Common myeloid progenitor, CD34-positive (primary cell): ENCODE measurements at regions of chr7 and their contacts with region 1.

Region 1: GRCh38 chr7:140479062-140479738 is at the start of gene MKRN1:
- DNase-seq: peak; percentile 85 to 92 (median 90)
- H3K4me3 ChIP-seq: peak within 1 kb of the TSS; percentile 69 to 92 (median 87)
- H3K27ac ChIP-seq: peak within 1 kb of the TSS; percentile 71 to 93
- H3K4me1 ChIP-seq: peaks cover 6 to 26% (median 23%) of the 10 kb centered on the region in 4 experiments
- H3K27me3 ChIP-seq: no peaks in the 10 kb centered on the region

Region 2: GRCh38 chr7:140439359-140439758 is 39.8 kb before region 1 on chr7:
- CTCF ChIA-PET with region 1: no interaction called
- POLR2A ChIA-PET with region 1: no interaction called
- DNase-seq: no peak
- H3K4me3 ChIP-seq: no peak overlapping the region
- H3K27ac ChIP-seq: no peak overlapping the region
- H3K4me1 ChIP-seq: peaks cover 0 to 3% (median under 1%) of the 10 kb centered on the region in 4 experiments
- H3K27me3 ChIP-seq: peaks cover 0 to 13% (median 0%) of the 10 kb centered on the region in 5 experiments

Region 3: GRCh38 chr7:140494867-140495266 is 15.7 kb after region 1 on chr7:
- CTCF ChIA-PET with region 1: interaction called, 30 read pairs
- POLR2A ChIA-PET with region 1: interaction called, 3 read pairs
- DNase-seq: no peak
- H3K4me3 ChIP-seq: no peak overlapping the region
- H3K27ac ChIP-seq: no peak overlapping the region
- H3K4me1 ChIP-seq: no peaks in the 10 kb centered on the region
- H3K27me3 ChIP-seq: no peaks in the 10 kb centered on the region

Region 4: GRCh38 chr7:140517546-140518369 is 38.6 kb after region 1 on chr7:
- CTCF ChIA-PET with region 1: interaction called, 13 read pairs
- POLR2A ChIA-PET with region 1: interaction called, 3 read pairs
- DNase-seq: peak; percentile 64 to 70 (median 68)
- H3K4me3 ChIP-seq: no peak overlapping the region
- H3K27ac ChIP-seq: no peak overlapping the region
- H3K4me1 ChIP-seq: peaks cover 0 to 3% (median 2%) of the 10 kb centered on the region in 4 experiments
- H3K27me3 ChIP-seq: peaks cover 0 to 4% (median 0%) of the 10 kb centered on the region in 5 experiments

Region 5: GRCh38 chr7:140562926-140563481 is 83.8 kb after region 1 on chr7:
- CTCF ChIA-PET with region 1: no interaction called
- POLR2A ChIA-PET with region 1: no interaction called
- DNase-seq: no peak
- H3K4me3 ChIP-seq: no peak overlapping the region
- H3K27ac ChIP-seq: no peak overlapping the region
- H3K4me1 ChIP-seq: no peaks in the 10 kb centered on the region
- H3K27me3 ChIP-seq: peaks cover 0 to 6% (median 0%) of the 10 kb centered on the region in 5 experiments

Region 6: DNA sequence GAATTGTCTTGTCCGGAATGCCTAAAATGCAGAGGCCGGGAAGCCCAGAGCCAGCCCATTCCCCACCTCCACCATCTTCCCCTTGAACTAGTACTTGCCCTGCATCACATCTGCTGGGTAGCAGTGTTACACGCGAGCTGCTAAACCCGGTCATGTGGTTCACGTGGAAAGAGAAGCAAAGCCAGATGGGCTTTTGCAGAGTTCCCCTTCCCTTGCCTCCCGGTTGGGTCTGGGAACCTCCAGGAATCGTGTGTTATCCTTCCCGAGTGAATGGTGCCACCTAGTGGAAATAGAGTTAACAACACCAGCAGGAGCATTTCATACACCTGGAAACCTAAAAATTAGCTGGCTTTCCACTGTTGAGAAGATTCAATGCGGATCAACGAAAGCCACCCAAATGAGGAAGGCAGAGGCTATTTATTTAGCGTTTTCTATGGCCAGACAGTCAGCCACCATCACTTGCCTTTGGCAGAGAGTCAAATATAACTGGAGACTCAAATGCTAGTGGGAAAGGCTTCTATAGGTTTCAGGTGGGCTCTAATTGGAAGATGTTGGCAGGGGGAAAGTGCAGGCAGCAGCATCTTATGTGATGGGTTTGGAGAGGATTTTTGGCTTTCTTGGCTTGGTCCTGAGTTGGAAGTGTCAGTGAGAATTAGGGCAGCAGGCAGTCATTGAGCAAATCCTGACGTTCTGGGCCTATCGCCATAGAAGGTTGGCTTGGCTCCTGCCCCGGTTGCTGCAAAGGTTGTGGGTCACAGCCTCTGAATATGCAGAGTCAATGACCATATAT is 174.3 kb after region 1 on chr7:
- CTCF ChIA-PET with region 1: interaction called, 10 read pairs
- POLR2A ChIA-PET with region 1: interaction called, 3 read pairs
- DNase-seq: peak; percentile 35 to 52 (median 45)
- H3K4me3 ChIP-seq: no peak overlapping the region
- H3K27ac ChIP-seq: no peak overlapping the region
- H3K4me1 ChIP-seq: peaks cover 2 to 17% (median 16%) of the 10 kb centered on the region in 4 experiments
- H3K27me3 ChIP-seq: no peaks in the 10 kb centered on the region